ENCODE measurements at regions of chr3 and their contacts with region 1.

Region 1: DNA sequence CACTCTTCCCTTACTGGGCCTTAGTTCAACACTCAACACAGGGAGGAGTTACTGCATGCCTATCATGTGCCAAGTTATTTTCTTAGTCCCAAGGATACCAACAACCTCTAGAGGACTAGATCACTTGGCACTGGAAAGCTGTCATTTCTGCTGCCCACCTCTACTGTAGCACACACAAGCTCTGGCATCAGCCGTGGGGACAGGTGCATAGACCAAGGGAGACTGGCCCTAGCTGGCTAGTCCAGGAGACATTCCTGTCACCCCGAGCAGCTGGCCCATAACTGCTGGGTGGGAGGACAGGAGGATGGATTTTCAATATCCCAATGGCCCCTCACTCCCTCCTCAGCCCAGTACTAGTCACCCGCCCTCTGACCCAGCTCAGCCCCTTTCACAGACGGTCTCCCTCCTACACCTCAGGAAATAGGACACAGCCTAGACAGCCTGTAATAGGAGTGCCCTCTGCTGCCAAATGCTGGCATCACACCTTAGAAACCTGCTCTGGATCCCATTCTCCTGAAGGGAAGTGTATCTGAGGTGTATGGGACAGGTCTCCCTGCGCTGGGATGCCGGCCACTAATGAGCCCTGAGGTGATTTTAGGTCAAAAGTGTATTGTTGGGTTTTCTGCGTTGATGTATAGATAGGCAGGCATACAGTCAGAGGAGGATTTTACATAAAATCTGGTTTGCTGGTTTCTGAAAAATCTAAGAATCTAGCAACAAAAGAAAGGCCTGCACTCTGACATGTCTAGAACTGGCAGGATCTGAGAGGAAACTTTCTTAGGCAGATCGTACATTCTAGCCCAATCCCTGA is 3.4 kb upstream of the DZIP1L start:
- DNase-seq: peak; percentile 36 to 42 (median 39)
- H3K4me3 ChIP-seq: no peak overlapping the region
- H3K27ac ChIP-seq: no peak overlapping the region
- H3K4me1 ChIP-seq: peaks cover 0 to 15% (median 4%) of the 10 kb centered on the region in 4 experiments
- H3K27me3 ChIP-seq: peaks cover 0 to 2% (median 0%) of the 10 kb centered on the region in 5 experiments

Region 2: DNA sequence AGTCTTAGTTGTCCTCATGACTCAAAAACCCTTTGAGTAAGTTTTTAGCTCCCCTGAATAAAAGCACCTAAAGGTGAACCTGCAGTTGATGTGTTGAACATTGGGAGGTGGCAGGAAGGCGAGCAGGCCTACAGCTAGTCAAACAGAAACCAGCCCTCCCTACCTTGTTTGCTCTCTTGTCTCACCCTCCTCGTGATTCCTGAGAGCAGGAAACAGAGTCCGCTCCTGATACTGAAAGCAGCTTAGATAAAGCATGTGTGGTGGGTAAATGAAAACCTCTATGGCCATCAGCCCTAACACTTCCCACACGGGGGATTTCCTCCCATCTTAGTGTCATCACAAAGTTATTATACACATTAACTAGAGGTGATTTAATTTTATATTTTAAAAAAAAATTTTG is 130.7 kb before region 1 on chr3:
- CTCF ChIA-PET with region 1: no interaction called
- POLR2A ChIA-PET with region 1: no interaction called
- DNase-seq: no peak
- H3K4me3 ChIP-seq: no peak overlapping the region
- H3K27ac ChIP-seq: no peak overlapping the region
- H3K4me1 ChIP-seq: no peaks in the 10 kb centered on the region
- H3K27me3 ChIP-seq: peaks cover 0 to 2% (median 0%) of the 10 kb centered on the region in 5 experiments

Region 3: DNA sequence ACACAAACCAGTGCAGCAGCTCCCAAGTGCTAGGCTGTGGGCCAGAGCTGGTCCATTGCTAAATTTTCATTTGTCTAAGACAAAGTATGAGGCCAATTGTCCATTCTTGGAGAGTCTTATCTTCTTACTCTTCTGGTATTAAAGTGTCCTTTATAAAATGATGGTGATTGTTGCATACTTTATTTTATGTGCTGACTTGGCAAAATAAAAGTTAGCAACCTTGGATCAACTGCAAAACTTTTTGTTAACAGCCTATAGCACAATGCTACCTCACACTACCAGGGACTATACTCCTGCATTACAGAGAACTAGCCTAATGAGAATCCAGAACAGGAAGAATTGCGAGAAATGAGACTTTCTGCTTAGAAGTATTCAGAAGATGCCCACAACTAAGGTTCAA is 64.8 kb before region 1 on chr3:
- CTCF ChIA-PET with region 1: no interaction called
- POLR2A ChIA-PET with region 1: no interaction called
- DNase-seq: no peak
- H3K4me3 ChIP-seq: no peak overlapping the region
- H3K27ac ChIP-seq: no peak overlapping the region
- H3K4me1 ChIP-seq: no peaks in the 10 kb centered on the region
- H3K27me3 ChIP-seq: no peaks in the 10 kb centered on the region

Region 4: GRCh38 chr3:138068579-138069174 is 50.1 kb before region 1 on chr3:
- CTCF ChIA-PET with region 1: interaction called, 30 read pairs
- POLR2A ChIA-PET with region 1: no interaction called
- DNase-seq: peak; percentile 77 to 86 (median 81)
- H3K4me3 ChIP-seq: no peak overlapping the region
- H3K27ac ChIP-seq: no peak overlapping the region
- H3K4me1 ChIP-seq: no peaks in the 10 kb centered on the region
- H3K27me3 ChIP-seq: no peaks in the 10 kb centered on the region

Region 5: GRCh38 chr3:138132239-138132638 is 13.4 kb after region 1 on chr3 and contains the start of gene A4GNT:
- CTCF ChIA-PET with region 1: interaction called, 18 read pairs
- POLR2A ChIA-PET with region 1: no interaction called
- DNase-seq: no peak
- H3K4me3 ChIP-seq: no peak within 1 kb of the TSS
- H3K27ac ChIP-seq: no peak within 1 kb of the TSS
- H3K4me1 ChIP-seq: peaks cover 16 to 31% (median 24%) of the 10 kb centered on the region in 4 experiments
- H3K27me3 ChIP-seq: no peaks in the 10 kb centered on the region

Region 6: DNA sequence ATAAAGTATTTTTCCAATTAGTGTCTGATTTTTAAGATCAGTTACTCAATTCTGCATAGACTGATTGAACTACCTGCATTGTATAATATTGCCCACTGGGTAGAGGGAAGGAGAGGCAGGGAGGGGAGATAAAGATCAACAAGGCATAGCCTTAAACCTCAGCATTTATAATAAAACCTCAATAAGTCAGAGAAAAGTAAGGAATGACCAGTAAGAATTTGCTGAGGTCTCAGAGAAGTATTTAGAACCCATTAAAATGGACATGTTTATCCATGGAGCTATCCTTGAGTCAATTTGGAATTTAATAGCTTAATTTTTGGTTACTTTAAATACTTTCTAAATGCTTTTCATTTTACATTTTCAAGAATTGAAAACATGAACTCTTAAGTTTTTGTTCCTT is 130.8 kb after region 1 on chr3:
- CTCF ChIA-PET with region 1: no interaction called
- POLR2A ChIA-PET with region 1: no interaction called
- DNase-seq: no peak
- H3K4me3 ChIP-seq: no peak overlapping the region
- H3K27ac ChIP-seq: no peak overlapping the region
- H3K4me1 ChIP-seq: no peaks in the 10 kb centered on the region
- H3K27me3 ChIP-seq: no peaks in the 10 kb centered on the region

Measured in common myeloid progenitor, CD34-positive (primary cell).